Mammary epithelial cell (primary cell): ENCODE measurements at regions of chr15 and their contacts with region 1.

Region 1: GRCh38 chr15:98805434-98806274 is 157.3 kb downstream of the IGF1R start:
- DNase-seq: no peak
- H3K4me3 ChIP-seq: no peak overlapping the region
- H3K27ac ChIP-seq: no peak overlapping the region
- H3K4me1 ChIP-seq: peaks cover 32% of the 10 kb centered on the region
- H3K27me3 ChIP-seq: no peaks in the 10 kb centered on the region
- CTCF ChIP-seq: peak in 1 of 2 donors; percentile 15

Region 2: GRCh38 chr15:98842192-98842966 is 36.7 kb after region 1 on chr15:
- CTCF ChIA-PET with region 1: no interaction called
- dilution Hi-C with region 1: no loop called
- in situ Hi-C with region 1: no loop called
- intact Hi-C with region 1: loop called (anchors 5 kb)
- DNase-seq: peak; percentile 14
- H3K4me3 ChIP-seq: no peak overlapping the region
- H3K27ac ChIP-seq: no peak overlapping the region
- H3K4me1 ChIP-seq: no peaks in the 10 kb centered on the region
- H3K27me3 ChIP-seq: no peaks in the 10 kb centered on the region
- CTCF ChIP-seq: no peak

Region 3: DNA sequence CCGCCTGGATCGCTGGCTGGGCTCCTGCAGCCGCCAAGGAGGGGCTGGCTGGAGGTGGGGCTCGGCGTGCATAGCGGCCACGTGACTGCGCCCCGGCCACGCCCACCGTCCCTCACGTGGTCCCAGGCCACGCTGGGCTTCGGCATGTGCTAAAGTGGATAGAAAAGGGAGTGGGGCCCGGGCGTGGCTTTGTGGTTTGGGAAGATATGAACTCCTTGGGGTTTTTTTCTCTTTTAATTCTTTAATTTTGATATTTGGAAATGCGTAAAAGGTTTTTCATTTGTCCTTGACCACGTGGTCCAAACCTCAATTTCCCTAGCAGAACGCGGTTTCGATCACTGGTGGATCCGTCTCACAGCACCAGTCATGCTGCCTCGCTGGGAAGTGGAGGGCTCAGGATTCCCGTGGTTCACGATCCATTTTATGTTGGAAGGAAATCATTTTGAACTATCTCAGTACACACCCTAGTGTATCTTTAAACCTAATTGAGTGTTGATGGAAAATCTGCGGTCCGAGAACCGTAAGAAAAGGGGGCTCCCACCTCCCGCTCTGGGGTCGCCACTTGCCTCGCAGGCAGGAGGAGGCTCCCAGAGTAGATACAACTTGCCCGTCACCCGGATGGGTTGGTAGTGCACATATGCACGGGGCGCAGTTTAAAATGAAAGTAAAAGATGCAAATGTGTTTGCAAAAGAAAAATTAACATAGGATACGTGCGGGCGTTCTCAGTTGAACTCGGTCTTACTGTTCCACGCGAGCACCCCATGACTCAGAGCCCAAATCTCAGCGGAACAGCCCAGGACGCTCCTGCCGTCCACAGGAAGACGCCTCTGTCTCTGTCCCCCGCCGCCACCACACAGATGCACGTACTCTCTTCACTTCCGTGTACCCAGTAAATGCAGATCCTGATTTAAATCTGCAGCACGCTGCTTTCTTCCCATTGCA is 60.0 kb after region 1 on chr15:
- CTCF ChIA-PET with region 1: no interaction called
- dilution Hi-C with region 1: no loop called
- in situ Hi-C with region 1: no loop called
- intact Hi-C with region 1: no loop called
- DNase-seq: no peak
- H3K4me3 ChIP-seq: peak overlapping the region; percentile 38 to 55 (median 38)
- H3K27ac ChIP-seq: peak overlapping the region; percentile 95
- H3K4me1 ChIP-seq: peaks cover 11% of the 10 kb centered on the region
- H3K27me3 ChIP-seq: no peaks in the 10 kb centered on the region
- CTCF ChIP-seq: no peak